ENCODE measurements at regions of chr5 and their contacts with region 1.

Region 1: GRCh38 chr5:171418316-171418981 is 998 bp upstream of the FGF18 start:
- DNase-seq: peak; percentile 81
- ATAC-seq: peak; percentile 90
- H3K4me3 ChIP-seq: peak overlapping the region; percentile 50
- H3K27ac ChIP-seq: peak overlapping the region; percentile 24
- H3K4me1 ChIP-seq: peaks cover 27% of the 10 kb centered on the region
- H3K27me3 ChIP-seq: peaks cover 13% of the 10 kb centered on the region
- CTCF ChIP-seq: peak; percentile 91

Region 2: GRCh38 chr5:171701100-171701541 is 282.7 kb after region 1 on chr5:
- intact Hi-C with region 1: no loop called
- DNase-seq: no peak
- ATAC-seq: no peak
- H3K4me3 ChIP-seq: no peak overlapping the region
- H3K27ac ChIP-seq: no peak overlapping the region
- H3K4me1 ChIP-seq: no peaks in the 10 kb centered on the region
- H3K27me3 ChIP-seq: no peaks in the 10 kb centered on the region
- CTCF ChIP-seq: no peak

Region 3: GRCh38 chr5:171907725-171908343 is 489.4 kb after region 1 on chr5:
- intact Hi-C with region 1: loop called (anchors 10 kb)
- DNase-seq: no peak
- ATAC-seq: peak; percentile 86 to 88
- H3K4me3 ChIP-seq: no peak overlapping the region
- H3K27ac ChIP-seq: no peak overlapping the region
- H3K4me1 ChIP-seq: peaks cover 24% of the 10 kb centered on the region
- H3K27me3 ChIP-seq: no peaks in the 10 kb centered on the region
- CTCF ChIP-seq: peak; percentile 77

Measured in lower lobe of right lung (tissue), 2 donors.